Gastrocnemius medialis (tissue), 4 donors: ENCODE measurements at regions of chr13 and their contacts with region 1.

Region 1: DNA sequence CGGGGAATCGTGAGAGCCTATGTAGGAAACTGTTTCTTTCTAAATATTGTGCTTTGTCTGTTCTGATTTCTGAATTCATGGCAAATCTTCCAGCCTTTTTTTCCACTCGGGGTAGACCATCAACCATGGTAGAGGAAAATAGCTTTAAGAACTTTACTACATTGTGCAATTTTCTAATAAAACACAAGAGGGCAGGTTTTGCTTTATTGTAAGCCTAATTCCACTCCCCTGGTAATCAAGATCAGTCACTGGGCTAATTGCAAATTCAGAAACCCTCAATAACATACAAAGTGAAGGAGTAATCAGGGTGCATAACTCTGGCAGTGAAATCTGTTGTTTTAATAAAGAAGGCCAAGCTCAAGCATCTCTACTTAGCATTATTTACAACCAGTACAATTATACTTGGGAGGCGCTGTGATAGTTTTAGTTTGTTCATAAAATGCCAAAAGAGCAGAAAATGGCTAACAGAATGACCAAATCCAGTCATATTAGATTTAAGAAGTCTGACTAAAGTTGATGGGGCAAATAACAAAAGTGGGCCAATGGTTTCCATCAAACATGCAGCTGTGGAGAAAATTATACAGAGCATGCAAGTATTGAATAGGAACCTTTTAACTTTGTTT is 43.8 kb downstream of the DCT start:
- DNase-seq: no peak
- ATAC-seq: peak in 1 of 2 donors; percentile 64
- H3K4me3 ChIP-seq: no peak overlapping the region
- H3K27ac ChIP-seq: no peak overlapping the region
- H3K4me1 ChIP-seq: no peaks in the 10 kb centered on the region
- H3K27me3 ChIP-seq: no peaks in the 10 kb centered on the region
- CTCF ChIP-seq: peak in 4 of 5 experiments; percentile 20 to 49 (median 42)
- POLR2A ChIP-seq: no peak

Region 2: DNA sequence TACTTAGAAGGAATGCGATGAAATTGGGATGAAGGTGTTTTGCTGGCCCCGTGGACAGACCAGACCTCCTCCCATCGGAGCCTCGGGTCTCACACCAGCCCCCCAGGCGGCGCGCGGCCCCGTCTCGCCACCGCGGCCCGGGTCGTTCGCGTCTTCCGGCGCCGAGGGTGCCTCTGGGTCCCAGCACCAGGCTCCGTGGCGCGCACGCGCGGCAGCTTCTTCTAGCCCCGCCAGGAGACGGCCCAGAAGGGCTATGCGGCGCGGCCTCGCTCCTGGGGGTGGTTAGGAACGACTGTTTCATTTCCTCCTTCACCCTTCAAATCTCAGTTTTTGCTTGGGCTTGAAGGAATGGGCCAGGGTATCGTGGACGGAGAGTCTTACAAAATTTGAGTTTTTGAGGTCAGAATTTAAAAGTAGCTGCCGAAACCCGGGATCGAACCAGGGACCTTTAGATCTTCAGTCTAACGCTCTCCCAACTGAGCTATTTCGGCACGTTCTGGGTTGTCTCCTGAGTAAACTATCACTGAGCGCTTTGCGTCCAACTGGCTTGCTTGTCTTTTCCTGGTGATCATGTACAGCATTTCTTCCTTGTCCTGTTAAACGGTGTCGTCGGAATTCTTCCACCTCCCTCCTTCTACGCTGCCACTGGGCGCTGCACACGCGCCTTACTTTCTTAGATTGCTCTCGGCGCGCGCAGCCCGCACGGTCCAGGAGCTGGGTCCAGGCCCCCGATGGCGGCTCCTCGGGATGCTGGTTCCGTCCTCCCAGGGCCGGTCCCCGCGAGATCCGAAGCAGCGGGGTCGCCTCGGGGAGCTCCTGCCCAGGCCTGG is 113.7 kb after region 1 on chr13:
- in situ Hi-C with region 1: no loop called
- intact Hi-C with region 1: loop called (anchors 10 kb)
- DNase-seq: peak; percentile 71 to 83
- ATAC-seq: peak; percentile 85 to 87
- H3K4me3 ChIP-seq: peak overlapping the region; percentile 70 to 81 (median 77)
- H3K27ac ChIP-seq: peak overlapping the region; percentile 78 to 94 (median 86)
- H3K4me1 ChIP-seq: peaks cover 8 to 12% of the 10 kb centered on the region in 2 donors
- H3K27me3 ChIP-seq: peaks cover 0 to 3% (median 0%) of the 10 kb centered on the region in 3 donors
- CTCF ChIP-seq: peak in 1 of 5 experiments; percentile 4
- POLR2A ChIP-seq: peak; percentile 24 to 40

Region 3: DNA sequence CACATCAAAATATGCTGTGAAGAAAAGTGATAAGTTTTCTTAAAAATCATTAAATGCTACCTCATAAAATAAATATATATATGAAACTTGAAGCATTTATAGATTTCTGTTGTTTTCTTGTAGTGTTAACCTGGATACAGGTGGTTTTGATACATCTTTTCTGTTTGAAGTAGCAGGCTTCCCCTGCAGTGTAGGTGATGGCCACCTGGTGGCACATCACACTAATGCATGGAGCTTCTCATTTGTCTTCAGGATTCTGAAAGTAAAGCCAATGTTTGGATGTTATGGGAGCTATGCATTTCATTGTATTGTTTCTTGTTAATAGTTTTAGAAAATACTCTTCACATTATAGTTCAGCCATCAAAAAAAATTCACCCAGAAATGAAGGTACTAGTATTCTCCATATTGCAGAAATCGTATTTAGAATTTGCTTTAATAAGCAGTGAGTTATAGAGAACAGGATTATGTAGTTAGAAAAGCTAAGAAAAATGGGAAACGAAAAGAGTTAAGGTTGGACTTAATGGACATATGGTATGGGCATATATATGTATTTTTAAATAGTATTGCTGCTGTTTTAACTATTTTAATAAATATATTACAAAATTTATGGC is 184.7 kb after region 1 on chr13:
- in situ Hi-C with region 1: loop called (anchors 5 to 10 kb)
- intact Hi-C with region 1: loop called (anchors 1 kb)
- DNase-seq: no peak
- ATAC-seq: no peak
- H3K4me3 ChIP-seq: no peak overlapping the region
- H3K27ac ChIP-seq: no peak overlapping the region
- H3K4me1 ChIP-seq: no peaks in the 10 kb centered on the region
- H3K27me3 ChIP-seq: no peaks in the 10 kb centered on the region
- CTCF ChIP-seq: peak in 1 of 5 experiments; percentile 30
- POLR2A ChIP-seq: no peak